Naive thymus-derived CD4-positive, alpha-beta T cell (primary cell): ENCODE measurements at regions of chr14 and their contacts with region 1.

Region 1: DNA sequence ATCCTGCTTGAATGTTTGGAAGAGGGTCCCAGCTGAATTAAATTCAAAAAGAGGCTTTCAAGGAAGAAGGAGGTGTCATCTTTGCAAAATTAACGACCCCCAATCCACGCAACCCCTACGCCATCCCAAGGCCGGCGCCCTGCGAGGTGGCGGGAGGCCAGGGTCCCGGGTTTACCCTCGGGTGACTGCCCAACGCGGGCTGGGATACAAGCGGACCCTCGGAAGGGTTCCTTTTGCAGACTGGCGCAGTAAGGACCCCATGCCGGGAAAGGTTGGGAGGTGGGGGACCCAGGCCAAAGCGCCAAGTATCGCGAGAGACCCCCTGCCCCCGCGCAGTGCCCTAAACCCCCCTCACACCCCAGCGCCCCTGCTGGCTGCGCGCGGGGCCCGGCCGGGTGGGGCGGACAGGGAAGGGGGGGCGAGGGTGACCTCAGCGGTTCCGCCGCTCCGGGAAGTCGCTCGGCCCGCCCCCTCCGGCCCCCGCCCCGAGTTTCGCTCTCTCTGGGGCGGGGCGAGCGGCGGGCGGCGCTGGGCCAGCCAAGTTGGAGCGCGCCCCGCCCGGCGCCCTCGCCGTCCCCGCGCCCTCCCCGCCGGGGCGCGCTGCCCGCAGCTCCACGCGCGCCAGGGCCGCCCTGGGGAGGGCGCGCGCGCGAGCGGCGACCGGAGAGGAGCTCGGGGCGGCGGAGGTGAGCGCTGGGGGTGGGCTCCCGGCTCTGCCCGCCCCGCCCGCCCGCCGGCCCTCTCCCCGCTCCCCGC is 708 bp upstream of the ZBTB42 start:
- DNase-seq: peak in 8 of 9 donors; percentile 55 to 85 (median 68)
- ATAC-seq: peak; percentile 82
- H3K4me3 ChIP-seq: peak overlapping the region; percentile 41
- H3K4me3 Mint-ChIP-seq: peak overlapping the region; percentile 59 to 90 (median 73)
- H3K27ac ChIP-seq: peak overlapping the region; percentile 70
- H3K27ac Mint-ChIP-seq: peak overlapping the region; percentile 32 to 94 (median 88)
- H3K4me1 ChIP-seq: peaks cover 20 to 27% of the 10 kb centered on the region in 2 donors
- H3K4me1 Mint-ChIP-seq: peaks cover 16 to 47% (median 32%) of the 10 kb centered on the region in 7 donors
- H3K27me3 ChIP-seq: no peaks in the 10 kb centered on the region
- H3K27me3 Mint-ChIP-seq: peaks cover 0 to 2% (median 0%) of the 10 kb centered on the region in 5 donors

Region 2: GRCh38 chr14:104820669-104821228 is 20.6 kb after region 1 on chr14:
- CTCF ChIA-PET with region 1: interaction called, 4 read pairs
- POLR2A ChIA-PET with region 1: interaction called, 13 read pairs
- intact Hi-C with region 1: no loop called
- DNase-seq: no peak
- ATAC-seq: no peak
- H3K4me3 ChIP-seq: no peak overlapping the region
- H3K4me3 Mint-ChIP-seq: no peak overlapping the region
- H3K27ac ChIP-seq: no peak overlapping the region
- H3K27ac Mint-ChIP-seq: no peak overlapping the region
- H3K4me1 ChIP-seq: peaks cover 8 to 10% of the 10 kb centered on the region in 2 donors
- H3K4me1 Mint-ChIP-seq: peaks cover 9 to 30% (median 20%) of the 10 kb centered on the region in 7 donors
- H3K27me3 ChIP-seq: no peaks in the 10 kb centered on the region
- H3K27me3 Mint-ChIP-seq: peaks cover 0 to 16% (median 0%) of the 10 kb centered on the region in 5 donors

Region 3: DNA sequence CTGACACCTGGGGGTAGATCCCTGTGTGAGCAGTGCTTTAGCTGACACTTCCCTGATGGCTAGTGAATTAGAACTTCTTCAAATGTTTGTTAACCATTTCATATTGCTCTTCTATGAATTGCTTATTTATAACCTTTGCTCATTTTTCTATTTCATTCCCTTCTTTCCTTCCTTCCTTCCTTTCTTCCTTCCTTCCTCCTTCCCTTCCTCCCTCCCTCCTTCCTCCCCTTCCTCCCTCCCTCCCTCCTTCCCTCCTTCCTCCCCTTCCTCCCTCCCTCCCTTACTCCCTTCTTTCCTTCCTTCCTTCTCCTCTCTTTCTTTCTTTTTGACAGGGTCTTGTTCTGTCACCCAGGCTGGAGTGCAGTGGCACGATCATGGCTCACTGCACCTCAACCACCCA is 41.5 kb after region 1 on chr14:
- CTCF ChIA-PET with region 1: no interaction called
- POLR2A ChIA-PET with region 1: no interaction called
- intact Hi-C with region 1: no loop called
- DNase-seq: no peak
- ATAC-seq: no peak
- H3K4me3 ChIP-seq: no peak overlapping the region
- H3K4me3 Mint-ChIP-seq: no peak overlapping the region
- H3K27ac ChIP-seq: no peak overlapping the region
- H3K27ac Mint-ChIP-seq: no peak overlapping the region
- H3K4me1 ChIP-seq: no peaks in the 10 kb centered on the region
- H3K4me1 Mint-ChIP-seq: peaks cover 0 to 13% (median 4%) of the 10 kb centered on the region in 7 donors
- H3K27me3 ChIP-seq: peaks cover 0 to 10% of the 10 kb centered on the region in 2 donors
- H3K27me3 Mint-ChIP-seq: peaks cover 41 to 73% (median 58%) of the 10 kb centered on the region in 5 donors

Region 4: DNA sequence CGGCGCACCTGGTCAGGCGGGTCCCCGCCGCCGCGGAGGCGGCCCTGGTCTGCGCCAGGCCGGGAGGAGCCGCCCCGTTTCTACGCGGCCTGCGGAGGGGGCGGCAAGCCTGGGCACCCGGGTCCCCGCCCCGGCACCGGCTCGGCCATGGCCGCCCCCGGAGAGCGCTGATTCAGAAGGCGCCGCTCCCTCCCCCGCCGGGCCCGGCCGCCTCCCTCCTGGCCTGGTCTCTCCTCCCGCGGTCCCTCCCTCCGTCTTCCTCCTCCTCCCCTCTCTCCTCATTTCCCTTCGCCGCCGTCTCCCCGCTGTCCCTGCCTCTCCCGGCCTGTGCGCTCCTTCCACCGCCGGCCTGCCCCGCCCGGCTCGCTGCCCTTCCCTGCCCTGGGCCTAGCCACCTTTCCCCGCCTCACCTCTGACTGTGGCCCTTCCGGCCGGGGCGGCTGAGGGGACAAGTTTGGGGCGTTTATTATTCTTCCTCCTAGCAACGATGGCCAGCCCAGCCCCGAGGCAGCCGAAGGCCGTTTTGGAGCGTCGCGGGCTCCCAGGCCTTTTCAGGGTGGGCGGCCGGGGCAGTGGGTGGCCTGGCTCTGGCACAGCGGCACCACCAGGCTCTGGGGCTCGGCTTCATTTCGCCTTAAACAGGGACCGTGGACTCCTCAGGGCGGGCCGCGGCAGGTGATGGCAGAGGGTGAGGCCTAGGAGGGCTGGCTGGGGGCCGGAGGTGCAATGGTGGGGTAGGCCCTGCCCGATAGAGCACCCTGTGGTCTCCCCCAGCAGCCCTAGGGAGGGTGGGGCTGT is 65.7 kb after region 1 on chr14:
- CTCF ChIA-PET with region 1: no interaction called
- POLR2A ChIA-PET with region 1: no interaction called
- intact Hi-C with region 1: loop called (anchors 1 to 2 kb)
- DNase-seq: peak in 1 of 9 donors; percentile 67
- ATAC-seq: peak; percentile 36
- H3K4me3 ChIP-seq: peak overlapping the region; percentile 24
- H3K4me3 Mint-ChIP-seq: peak overlapping the region in 9 of 10 donors; percentile 16 to 79 (median 69)
- H3K27ac ChIP-seq: peak overlapping the region; percentile 25
- H3K27ac Mint-ChIP-seq: peak overlapping the region in 1 of 9 donors; percentile 18
- H3K4me1 ChIP-seq: no peaks in the 10 kb centered on the region
- H3K4me1 Mint-ChIP-seq: peaks cover 0 to 9% (median 4%) of the 10 kb centered on the region in 7 donors
- H3K27me3 ChIP-seq: no peaks in the 10 kb centered on the region
- H3K27me3 Mint-ChIP-seq: peaks cover 0 to 23% (median 7%) of the 10 kb centered on the region in 5 donors

Region 5: DNA sequence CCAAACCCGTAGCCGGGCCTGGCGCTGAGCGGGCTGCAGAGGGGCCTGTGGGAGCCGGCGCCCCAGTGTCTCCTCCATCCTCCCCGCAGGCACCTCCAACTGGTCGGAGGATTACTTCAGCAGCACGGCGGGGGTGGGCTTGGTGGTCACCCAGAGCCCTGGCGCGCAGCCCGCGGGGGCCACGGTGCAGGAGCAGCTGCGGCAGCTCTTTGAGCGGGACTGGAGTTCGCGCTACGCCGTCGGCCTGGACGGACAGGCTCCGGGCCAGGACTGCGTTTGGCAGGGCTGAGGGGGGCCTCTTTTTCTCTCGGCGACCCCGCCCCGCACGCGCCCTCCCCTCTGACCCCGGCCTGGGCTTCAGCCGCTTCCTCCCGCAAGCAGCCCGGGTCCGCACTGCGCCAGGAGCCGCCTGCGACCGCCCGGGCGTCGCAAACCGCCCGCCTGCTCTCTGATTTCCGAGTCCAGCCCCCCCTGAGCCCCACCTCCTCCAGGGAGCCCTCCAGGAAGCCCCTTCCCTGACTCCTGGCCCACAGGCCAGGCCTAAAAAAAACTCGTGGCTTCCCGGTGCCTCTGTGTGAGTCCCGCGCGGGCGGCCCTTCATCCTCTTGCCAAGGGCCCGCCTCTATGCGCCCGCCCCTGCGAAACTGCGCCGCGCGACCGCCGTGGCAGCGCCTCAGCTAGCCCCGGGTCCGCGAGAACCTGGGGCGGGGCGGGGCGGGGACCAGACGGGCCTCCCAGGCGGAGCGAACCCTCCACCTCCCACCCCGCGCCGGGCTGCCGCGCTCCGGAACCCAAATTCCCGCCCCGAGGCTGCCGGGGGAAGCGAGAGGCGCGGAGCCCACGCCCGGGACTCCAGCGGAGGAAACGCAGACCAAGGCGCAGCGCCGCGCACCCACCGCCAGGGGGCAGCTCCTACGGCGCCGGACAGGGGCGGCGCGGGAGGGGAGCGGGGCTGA is 132.8 kb after region 1 on chr14:
- CTCF ChIA-PET with region 1: no interaction called
- POLR2A ChIA-PET with region 1: no interaction called
- intact Hi-C with region 1: loop called in 1 of 2 experiments (anchors 1 kb)
- DNase-seq: peak; percentile 62 to 91 (median 83)
- ATAC-seq: peak; percentile 94
- H3K4me3 ChIP-seq: peak overlapping the region; percentile 20
- H3K4me3 Mint-ChIP-seq: peak overlapping the region in 8 of 10 donors; percentile 44 to 76 (median 64)
- H3K27ac ChIP-seq: peak overlapping the region; percentile 29
- H3K27ac Mint-ChIP-seq: no peak overlapping the region
- H3K4me1 ChIP-seq: peaks cover 0 to 4% of the 10 kb centered on the region in 2 donors
- H3K4me1 Mint-ChIP-seq: peaks cover 4 to 11% (median 8%) of the 10 kb centered on the region in 7 donors
- H3K27me3 ChIP-seq: no peaks in the 10 kb centered on the region
- H3K27me3 Mint-ChIP-seq: peaks cover 0 to 26% (median 4%) of the 10 kb centered on the region in 5 donors